Activated CD4-positive, alpha-beta memory T cell treated with anti-CD3 and anti-CD28 coated beads, Interleukin-2, amount 10 ng/mL, durations not matched to agents 7 days and 5 days (primary cell): ENCODE measurements at regions of chr19 and their contacts with region 1.

Region 1: GRCh38 chr19:20423381-20424197 is 142.0 kb downstream of the ZNF737 start:
- DNase-seq: peak; percentile 42
- H3K4me3 Mint-ChIP-seq: peak overlapping the region; percentile 97
- H3K27ac Mint-ChIP-seq: peak overlapping the region; percentile 97
- H3K4me1 Mint-ChIP-seq: peaks cover 13% of the 10 kb centered on the region
- H3K27me3 Mint-ChIP-seq: no peaks in the 10 kb centered on the region

Region 2: GRCh38 chr19:20039203-20039723 is 384.3 kb before region 1 on chr19 and contains the start of gene ZNF682:
- CTCF ChIA-PET with region 1: no interaction called
- POLR2A ChIA-PET with region 1: interaction called, 13 read pairs
- DNase-seq: peak; percentile 92
- H3K4me3 Mint-ChIP-seq: peak within 1 kb of the TSS; percentile 92
- H3K27ac Mint-ChIP-seq: peak within 1 kb of the TSS; percentile 89
- H3K4me1 Mint-ChIP-seq: peaks cover 20% of the 10 kb centered on the region
- H3K27me3 Mint-ChIP-seq: no peaks in the 10 kb centered on the region
- total RNA-seq, gene ZNF682: 4.8 to 5.5 TPM

Region 3: DNA sequence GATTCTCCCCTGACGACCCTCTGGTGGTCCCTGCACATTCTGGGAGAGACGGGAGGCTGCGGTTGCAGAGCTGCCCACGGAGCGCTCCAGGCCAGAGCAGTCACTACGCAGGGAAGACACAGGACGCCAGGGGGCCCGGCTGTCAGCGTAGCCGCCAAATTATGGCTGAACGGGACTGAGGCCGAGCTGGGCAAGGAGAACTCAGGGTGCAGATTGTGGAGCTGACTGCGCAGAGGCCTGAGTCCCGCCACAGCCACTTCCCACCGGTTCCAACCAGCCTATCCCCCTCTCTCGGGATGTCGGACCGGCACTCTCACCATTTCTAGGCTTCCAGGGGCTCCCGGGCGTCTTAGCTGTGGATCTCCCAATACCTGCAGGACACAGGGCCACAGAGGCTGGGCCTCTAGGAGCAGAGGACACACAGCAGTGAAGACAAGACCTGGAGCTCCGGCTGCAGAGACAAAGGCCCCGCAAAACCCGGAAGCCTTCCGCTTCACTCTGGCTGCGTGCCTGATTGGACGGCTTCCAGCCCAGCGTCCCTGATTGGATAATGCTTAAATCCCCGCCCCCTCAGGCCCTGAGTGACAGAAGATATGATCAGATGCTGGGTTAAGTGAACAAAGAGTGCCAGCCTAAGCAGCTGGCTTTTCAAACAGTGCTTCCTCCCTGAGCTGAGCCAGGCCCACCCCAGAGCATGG is 141.9 kb after region 1 on chr19 and contains the start of gene ZNF737:
- CTCF ChIA-PET with region 1: interaction called, 4 read pairs
- POLR2A ChIA-PET with region 1: interaction called, 37 read pairs
- DNase-seq: peak; percentile 91
- H3K4me3 Mint-ChIP-seq: peak within 1 kb of the TSS; percentile 98
- H3K27ac Mint-ChIP-seq: peak within 1 kb of the TSS; percentile 93
- H3K4me1 Mint-ChIP-seq: peaks cover 20% of the 10 kb centered on the region
- H3K27me3 Mint-ChIP-seq: no peaks in the 10 kb centered on the region
- total RNA-seq, gene ZNF737: 10.4 to 11.7 TPM

Region 4: GRCh38 chr19:20661150-20661819 is 237.7 kb after region 1 on chr19 and contains the start of gene ZNF626:
- CTCF ChIA-PET with region 1: interaction called, 3 read pairs
- POLR2A ChIA-PET with region 1: interaction called, 16 read pairs
- DNase-seq: peak; percentile 92
- H3K4me3 Mint-ChIP-seq: peak within 1 kb of the TSS; percentile 88
- H3K27ac Mint-ChIP-seq: peak within 1 kb of the TSS; percentile 84
- H3K4me1 Mint-ChIP-seq: peaks cover 23% of the 10 kb centered on the region
- H3K27me3 Mint-ChIP-seq: no peaks in the 10 kb centered on the region
- total RNA-seq, gene ZNF626: 7.6 to 8.5 TPM

Region 5: GRCh38 chr19:21141787-21142464 is 718.3 kb after region 1 on chr19 and contains the start of gene ZNF431:
- CTCF ChIA-PET with region 1: no interaction called
- POLR2A ChIA-PET with region 1: interaction called, 13 read pairs
- DNase-seq: peak; percentile 93
- H3K4me3 Mint-ChIP-seq: peak within 1 kb of the TSS; percentile 96
- H3K27ac Mint-ChIP-seq: peak within 1 kb of the TSS; percentile 91
- H3K4me1 Mint-ChIP-seq: peaks cover 22% of the 10 kb centered on the region
- H3K27me3 Mint-ChIP-seq: no peaks in the 10 kb centered on the region
- total RNA-seq, gene ZNF431: 16.1 to 20.5 TPM

Region 6: DNA sequence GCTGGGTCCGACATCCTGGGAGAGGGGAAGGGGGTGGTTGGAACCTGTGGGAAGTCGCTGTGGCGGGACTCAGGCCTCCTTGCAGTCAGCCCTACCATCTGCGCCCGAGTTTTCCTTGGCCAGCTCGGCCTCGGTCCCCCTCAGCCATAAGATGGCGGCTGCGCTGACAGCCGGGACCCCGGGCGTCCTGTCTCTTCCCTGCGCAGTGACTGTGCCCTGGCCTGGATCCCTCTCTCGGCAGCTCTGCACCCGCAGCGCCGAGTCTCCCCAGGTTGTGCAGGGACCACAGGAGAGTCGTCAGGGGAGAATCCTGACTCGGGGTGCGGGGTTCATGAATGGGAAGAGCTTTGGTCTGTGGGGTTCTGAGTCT is 1629.0 kb after region 1 on chr19:
- CTCF ChIA-PET with region 1: no interaction called
- POLR2A ChIA-PET with region 1: interaction called, 10 read pairs
- DNase-seq: peak; percentile 31
- H3K4me3 Mint-ChIP-seq: peak overlapping the region; percentile 91
- H3K27ac Mint-ChIP-seq: peak overlapping the region; percentile 85
- H3K4me1 Mint-ChIP-seq: peaks cover 5% of the 10 kb centered on the region
- H3K27me3 Mint-ChIP-seq: no peaks in the 10 kb centered on the region